ENCODE measurements at regions of chr19 and their contacts with region 1.

Region 1: GRCh38 chr19:8389891-8390616 is at the start of gene RAB11B:
- DNase-seq: peak; percentile 100
- ATAC-seq: peak; percentile 97
- H3K4me3 ChIP-seq: peak within 1 kb of the TSS; percentile 74
- H3K27ac ChIP-seq: peak within 1 kb of the TSS; percentile 98
- H3K4me1 ChIP-seq: peaks cover 11% of the 10 kb centered on the region
- H3K27me3 ChIP-seq: no peaks in the 10 kb centered on the region
- CTCF ChIP-seq: no peak
- EP300 ChIP-seq: 0 out of 4 replicates have a peak, but pooled peaks of 1 of the 2 experiments have one; percentile 53
- POLR2A ChIP-seq: peak; percentile 81
- RAD21 ChIP-seq: no peak
- polyA plus RNA-seq, gene RAB11B: 0.92 to 2.6 TPM

Region 2: GRCh38 chr19:8307965-8308866 is 81.8 kb before region 1 on chr19 and contains the start of gene CD320:
- CTCF ChIA-PET with region 1: no interaction called
- POLR2A ChIA-PET with region 1: no interaction called
- RAD21 ChIA-PET with region 1: no interaction called
- SMC1A ChIA-PET with region 1: no interaction called
- in situ Hi-C with region 1: no loop called
- intact Hi-C with region 1: no loop called
- DNase-seq: peak; percentile 63
- ATAC-seq: peak; percentile 94
- H3K4me3 ChIP-seq: peak within 1 kb of the TSS; percentile 91
- H3K27ac ChIP-seq: peak within 1 kb of the TSS; percentile 35
- H3K4me1 ChIP-seq: peaks cover 11% of the 10 kb centered on the region
- H3K27me3 ChIP-seq: no peaks in the 10 kb centered on the region
- CTCF ChIP-seq: no peak
- EP300 ChIP-seq: peak in 1 of 2 experiments; percentile 39; a peak in 1 of 4 replicates
- POLR2A ChIP-seq: peak; percentile 89
- RAD21 ChIP-seq: no peak
- polyA plus RNA-seq, gene CD320: 1.1 to 3.5 TPM

Region 3: GRCh38 chr19:8513687-8514504 is 123.8 kb after region 1 on chr19 and contains the start of gene ZNF414:
- CTCF ChIA-PET with region 1: interaction called, 3 read pairs
- POLR2A ChIA-PET with region 1: interaction called, 11 read pairs
- RAD21 ChIA-PET with region 1: interaction called, 5 read pairs
- SMC1A ChIA-PET with region 1: no interaction called
- in situ Hi-C with region 1: no loop called
- intact Hi-C with region 1: no loop called
- DNase-seq: peak; percentile 60
- ATAC-seq: peak; percentile 98
- H3K4me3 ChIP-seq: peak within 1 kb of the TSS; percentile 67
- H3K27ac ChIP-seq: peak within 1 kb of the TSS; percentile 97
- H3K4me1 ChIP-seq: peaks cover 11% of the 10 kb centered on the region; the same call in 1 of the 2 replicates
- H3K27me3 ChIP-seq: no peaks in the 10 kb centered on the region
- CTCF ChIP-seq: no peak
- EP300 ChIP-seq: no peak
- POLR2A ChIP-seq: peak; percentile 98
- RAD21 ChIP-seq: no peak
- polyA plus RNA-seq, gene ZNF414: 0.16 TPM in 1 of 2 experiments, not detected in the other